ENCODE measurements at regions of chr15 and their contacts with region 1.

Region 1: GRCh38 chr15:101439285-101439919 is 50.1 kb downstream of the PCSK6 start:
- DNase-seq: no peak
- ATAC-seq: peak; percentile 60

Region 2: DNA sequence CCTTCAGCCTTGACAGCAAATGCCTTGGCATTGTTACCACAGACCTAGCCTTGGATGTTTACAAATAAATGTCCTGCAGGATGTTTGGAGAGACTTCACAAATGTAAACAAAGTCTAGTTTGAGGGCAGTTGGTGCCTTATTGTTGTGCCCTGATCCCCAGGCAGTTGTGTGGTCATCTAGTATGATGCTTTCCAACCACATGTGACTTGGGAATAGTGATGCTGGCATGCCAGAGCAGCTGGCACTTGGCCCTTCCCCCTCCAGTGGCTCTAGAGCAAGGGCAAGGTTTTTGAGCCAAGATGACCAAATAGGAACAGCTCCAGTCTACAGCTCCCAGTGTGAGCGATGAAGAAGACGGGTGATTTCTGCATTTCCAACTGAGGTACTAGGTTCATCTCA is 1355.8 kb before region 1 on chr15:
- intact Hi-C with region 1: loop called (anchors 5 kb)
- DNase-seq: no peak
- ATAC-seq: no peak

Region 3: DNA sequence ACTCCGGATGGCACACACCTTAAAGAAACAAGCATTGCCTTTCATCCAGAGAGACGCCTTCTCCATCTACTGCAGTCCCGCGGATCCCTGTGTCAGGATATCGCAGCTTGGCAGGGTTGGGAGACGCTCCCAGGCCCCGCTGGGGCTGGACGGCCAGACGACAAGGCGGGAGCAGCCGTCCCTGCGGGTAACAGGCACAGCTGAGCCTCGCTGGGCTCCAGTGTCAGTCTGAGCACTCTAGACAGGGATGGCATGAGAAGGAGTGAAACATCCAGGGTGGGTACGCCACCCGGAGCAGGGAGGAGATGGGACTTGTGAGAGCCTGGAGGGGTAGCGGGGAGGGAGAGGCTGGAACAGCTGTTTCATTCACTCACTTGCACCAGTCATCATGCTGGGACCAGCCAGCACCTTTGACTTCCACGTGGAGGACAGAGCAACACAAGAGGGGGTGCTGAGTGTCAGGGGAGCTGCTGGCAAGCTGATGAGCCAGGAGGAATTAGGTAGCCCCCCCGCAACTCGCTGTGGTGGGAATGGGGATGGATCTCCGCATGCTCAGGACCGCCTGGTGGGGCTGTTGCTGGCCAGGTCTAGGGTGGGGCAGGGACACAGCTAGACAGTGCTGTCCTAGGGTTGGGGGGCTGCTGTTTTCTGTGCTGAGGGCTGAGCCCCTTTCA is 112.8 kb before region 1 on chr15:
- intact Hi-C with region 1: no loop called
- DNase-seq: peak; percentile 37
- ATAC-seq: no peak